ENCODE measurements at regions of chr6 and their contacts with region 1.

Region 1: DNA sequence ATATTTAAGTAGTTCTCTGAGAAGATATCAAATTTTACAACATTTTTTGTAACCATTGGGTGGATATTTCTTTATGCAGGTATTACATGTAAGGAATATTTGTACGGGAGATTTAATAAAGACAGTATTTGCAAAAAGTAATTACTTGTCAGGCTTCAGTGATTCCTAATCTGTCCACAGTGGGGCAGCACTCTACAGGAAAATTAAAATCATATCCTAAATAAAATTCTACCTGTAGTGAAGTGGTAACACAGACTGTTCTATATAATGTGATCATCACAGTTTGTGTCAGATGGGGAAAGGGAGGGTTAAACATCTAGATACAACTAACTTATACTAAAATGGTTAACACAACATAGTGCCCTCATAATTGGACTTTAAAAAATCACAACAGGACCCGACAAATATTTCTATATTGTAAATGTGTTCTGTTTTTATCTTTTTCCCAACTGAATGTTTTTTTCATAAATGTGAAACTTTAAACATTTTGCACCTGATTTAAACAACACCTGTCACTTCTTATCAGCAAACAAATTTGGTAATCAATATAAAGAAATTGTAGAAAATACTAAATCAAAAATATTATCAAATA is 145.6 kb upstream of the MANEA start:
- DNase-seq: no peak
- ATAC-seq: no peak
- H3K4me3 ChIP-seq: no peak overlapping the region
- H3K27ac ChIP-seq: no peak overlapping the region
- H3K4me1 ChIP-seq: no peaks in the 10 kb centered on the region
- H3K27me3 ChIP-seq: no peaks in the 10 kb centered on the region
- CTCF ChIP-seq: peak; percentile 48 to 79 (median 70)

Region 2: GRCh38 chr6:95469511-95469910 is 37.8 kb after region 1 on chr6:
- intact Hi-C with region 1: no loop called
- DNase-seq: no peak
- ATAC-seq: no peak
- H3K4me3 ChIP-seq: no peak overlapping the region
- H3K27ac ChIP-seq: no peak overlapping the region
- H3K4me1 ChIP-seq: no peaks in the 10 kb centered on the region
- H3K27me3 ChIP-seq: no peaks in the 10 kb centered on the region
- CTCF ChIP-seq: no peak

Region 3: GRCh38 chr6:95519228-95520037 is 87.7 kb after region 1 on chr6:
- intact Hi-C with region 1: no loop called
- DNase-seq: no peak
- ATAC-seq: no peak
- H3K4me3 ChIP-seq: no peak overlapping the region
- H3K27ac ChIP-seq: no peak overlapping the region
- H3K4me1 ChIP-seq: no peaks in the 10 kb centered on the region
- H3K27me3 ChIP-seq: no peaks in the 10 kb centered on the region
- CTCF ChIP-seq: no peak

Region 4: DNA sequence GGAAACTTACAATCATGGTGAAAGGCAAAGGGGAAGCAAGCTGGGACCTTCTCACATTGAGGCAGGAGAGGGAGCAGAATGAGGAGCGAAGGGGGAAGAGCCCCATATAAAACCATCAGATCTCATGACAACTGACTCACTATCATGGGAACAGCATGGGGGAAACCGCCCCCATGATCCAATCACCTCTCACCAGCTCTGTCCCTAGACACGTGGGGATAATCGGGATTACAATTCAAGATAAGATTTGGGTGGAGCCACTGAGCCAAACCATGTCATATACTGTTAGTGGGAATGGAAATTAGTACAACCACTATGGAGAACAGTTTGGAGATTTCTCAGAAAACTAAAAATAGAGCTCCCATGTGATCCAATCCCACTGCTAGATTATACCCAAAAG is 309.3 kb after region 1 on chr6:
- intact Hi-C with region 1: loop called in 1 of 10 experiments (anchors 10 kb)
- DNase-seq: no peak
- ATAC-seq: no peak
- H3K4me3 ChIP-seq: no peak overlapping the region
- H3K27ac ChIP-seq: no peak overlapping the region
- H3K4me1 ChIP-seq: no peaks in the 10 kb centered on the region
- H3K27me3 ChIP-seq: no peaks in the 10 kb centered on the region
- CTCF ChIP-seq: no peak

Region 5: DNA sequence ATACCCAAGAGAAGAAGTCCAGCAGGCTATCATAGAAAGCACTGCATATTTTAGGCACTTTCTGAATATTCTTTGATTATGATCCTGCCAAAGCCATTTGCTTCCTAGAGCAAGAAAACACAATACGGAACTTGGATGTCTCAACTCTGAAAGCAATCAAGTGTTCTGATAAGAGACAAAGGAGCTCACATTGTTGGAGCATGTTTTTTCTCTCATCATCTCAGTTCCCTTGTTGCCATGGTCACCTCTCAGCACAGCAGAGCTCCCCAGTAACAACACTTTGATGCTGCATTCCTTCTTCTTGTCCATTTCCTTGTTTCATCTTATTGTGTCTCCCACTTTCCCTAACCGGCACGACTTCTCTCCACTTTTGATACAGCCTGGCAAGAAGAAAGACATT is 415.3 kb after region 1 on chr6:
- intact Hi-C with region 1: loop called in 1 of 10 experiments (anchors 10 kb)
- DNase-seq: no peak
- ATAC-seq: peak in 1 of 8 donors; percentile 9
- H3K4me3 ChIP-seq: no peak overlapping the region
- H3K27ac ChIP-seq: no peak overlapping the region
- H3K4me1 ChIP-seq: no peaks in the 10 kb centered on the region
- H3K27me3 ChIP-seq: no peaks in the 10 kb centered on the region
- CTCF ChIP-seq: no peak

Region 6: GRCh38 chr6:95866732-95867131 is 435.0 kb after region 1 on chr6:
- intact Hi-C with region 1: loop called in 2 of 10 experiments (anchors 5 kb)
- DNase-seq: no peak
- ATAC-seq: no peak
- H3K4me3 ChIP-seq: no peak overlapping the region
- H3K27ac ChIP-seq: no peak overlapping the region
- H3K4me1 ChIP-seq: no peaks in the 10 kb centered on the region
- H3K27me3 ChIP-seq: no peaks in the 10 kb centered on the region
- CTCF ChIP-seq: peak in 7 of 9 donors; percentile 16 to 55 (median 38)

Measured in heart right ventricle (tissue), 16 donors.